ENCODE measurements at regions of chr20 and their contacts with region 1.

Region 1: GRCh38 chr20:49569411-49570115 is 1.6 kb upstream of the PTGIS start:
- DNase-seq: peak in 1 of 2 donors; percentile 61
- H3K4me3 ChIP-seq: no peak overlapping the region
- H3K27ac ChIP-seq: peak overlapping the region; percentile 97 to 100
- H3K4me1 ChIP-seq: peaks cover 19 to 43% of the 10 kb centered on the region in 2 donors
- H3K27me3 ChIP-seq: no peaks in the 10 kb centered on the region
- CTCF ChIP-seq: no peak

Region 2: DNA sequence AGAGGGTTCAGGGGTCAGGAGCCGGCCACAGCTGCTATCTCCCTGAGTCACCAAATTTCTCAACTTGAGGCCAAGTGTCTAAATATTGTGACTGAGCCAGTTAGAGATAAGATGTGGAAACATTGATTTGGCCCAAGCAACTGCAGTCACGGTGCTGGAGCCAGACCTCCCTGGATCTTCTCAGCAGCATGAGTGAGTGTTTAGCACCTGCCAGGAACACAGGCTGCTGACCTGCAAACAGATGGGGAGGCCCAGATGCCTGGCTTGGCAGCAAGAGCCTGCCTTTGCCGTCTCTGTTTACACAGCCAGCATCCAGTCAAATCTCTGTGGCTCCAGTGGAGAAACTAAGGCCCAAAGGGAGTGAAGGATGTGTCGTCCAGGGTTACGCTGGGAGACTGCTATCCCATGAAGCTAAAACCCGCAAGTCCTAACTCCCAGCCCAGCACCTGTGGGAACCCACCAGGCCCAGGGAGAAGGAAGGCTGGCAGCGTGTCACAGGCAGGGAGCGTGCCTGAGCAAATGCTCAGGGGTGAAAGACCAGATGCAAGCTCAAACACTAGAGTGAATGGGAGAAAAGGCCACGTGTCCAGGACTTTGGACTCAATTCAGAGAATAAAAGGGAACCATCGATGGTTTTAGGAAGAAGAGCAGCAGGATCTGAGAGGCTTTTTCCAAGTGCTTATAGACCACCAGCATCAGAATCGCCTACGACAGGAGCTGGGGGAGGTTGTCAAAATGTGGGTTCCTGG is 14.3 kb after region 1 on chr20:
- intact Hi-C with region 1: loop called (anchors 2 kb)
- DNase-seq: peak; percentile 78 to 92
- H3K4me3 ChIP-seq: no peak overlapping the region
- H3K27ac ChIP-seq: peak overlapping the region; percentile 97 to 100
- H3K4me1 ChIP-seq: peaks cover 31 to 83% of the 10 kb centered on the region in 2 donors
- H3K27me3 ChIP-seq: no peaks in the 10 kb centered on the region
- CTCF ChIP-seq: peak in 1 of 3 experiments; percentile 13